ENCODE measurements at regions of chr20 and their contacts with region 1.

Region 1: GRCh38 chr20:10034717-10035571 is at the start of gene ANKEF1:
- DNase-seq: peak; percentile 29 to 88
- H3K4me3 ChIP-seq: peak within 1 kb of the TSS; percentile 42 to 73 (median 53)
- H3K27ac ChIP-seq: no peak within 1 kb of the TSS
- H3K4me1 ChIP-seq: peaks cover 0 to 3% (median 1%) of the 10 kb centered on the region in 4 experiments; a peak in 2 of 7 replicates
- H3K27me3 ChIP-seq: no peaks in the 10 kb centered on the region
- CTCF ChIP-seq: 0 out of 4 replicates have a peak, but pooled peaks of 1 of the 3 experiments have one; percentile 8
- EP300 ChIP-seq: peak in 1 of 2 experiments; percentile 11; a peak in 1 of 3 replicates
- POLR2A ChIP-seq: peak in 1 of 2 experiments; percentile 75; a peak in 2 of 3 replicates
- RAD21 ChIP-seq: peak in 1 of 2 experiments; percentile 17; a peak in 1 of 4 replicates
- total RNA-seq, gene ANKEF1: 9.8 and 10.0 TPM in 2 replicates

Region 2: GRCh38 chr20:9928955-9929354 is 106.0 kb before region 1 on chr20:
- CTCF ChIA-PET with region 1: no interaction called
- POLR2A ChIA-PET with region 1: no interaction called
- DNase-seq: no peak
- H3K4me3 ChIP-seq: no peak overlapping the region
- H3K27ac ChIP-seq: no peak overlapping the region
- H3K4me1 ChIP-seq: no peaks in the 10 kb centered on the region
- H3K27me3 ChIP-seq: no peaks in the 10 kb centered on the region
- CTCF ChIP-seq: no peak
- EP300 ChIP-seq: no peak
- POLR2A ChIP-seq: no peak
- RAD21 ChIP-seq: no peak

Region 3: GRCh38 chr20:10047427-10047826 is 12.5 kb after region 1 on chr20:
- CTCF ChIA-PET with region 1: interaction called, 27 read pairs
- POLR2A ChIA-PET with region 1: interaction called, 5 read pairs
- DNase-seq: peak; percentile 17 to 57
- H3K4me3 ChIP-seq: no peak overlapping the region
- H3K27ac ChIP-seq: no peak overlapping the region
- H3K4me1 ChIP-seq: no peaks in the 10 kb centered on the region
- H3K27me3 ChIP-seq: no peaks in the 10 kb centered on the region
- CTCF ChIP-seq: peak; percentile 55 to 73 (median 72)
- EP300 ChIP-seq: no peak
- POLR2A ChIP-seq: no peak
- RAD21 ChIP-seq: peak; percentile 51 to 58

Region 4: GRCh38 chr20:10115021-10115420 is 80.1 kb after region 1 on chr20:
- CTCF ChIA-PET with region 1: no interaction called
- POLR2A ChIA-PET with region 1: no interaction called
- DNase-seq: no peak
- H3K4me3 ChIP-seq: no peak overlapping the region
- H3K27ac ChIP-seq: no peak overlapping the region
- H3K4me1 ChIP-seq: no peaks in the 10 kb centered on the region
- H3K27me3 ChIP-seq: no peaks in the 10 kb centered on the region
- CTCF ChIP-seq: no peak
- EP300 ChIP-seq: no peak
- POLR2A ChIP-seq: no peak
- RAD21 ChIP-seq: no peak

Measured in H1 (cell line).